ENCODE measurements at regions of chr3 and their contacts with region 1.

Region 1: GRCh38 chr3:119937229-119937628 is 155.3 kb downstream of the NR1I2 start:
- DNase-seq: no peak
- ATAC-seq: no peak
- H3K4me3 ChIP-seq: no peak overlapping the region
- H3K27ac ChIP-seq: no peak overlapping the region
- H3K4me1 ChIP-seq: peaks cover 0 to 12% of the 10 kb centered on the region in 2 donors
- H3K27me3 ChIP-seq: no peaks in the 10 kb centered on the region
- CTCF ChIP-seq: no peak
- POLR2A ChIP-seq: no peak

Region 2: GRCh38 chr3:119864476-119864875 is 72.8 kb before region 1 on chr3:
- in situ Hi-C with region 1: no loop called
- intact Hi-C with region 1: loop called (anchors 2 kb)
- DNase-seq: no peak
- ATAC-seq: no peak
- H3K4me3 ChIP-seq: no peak overlapping the region
- H3K27ac ChIP-seq: no peak overlapping the region
- H3K4me1 ChIP-seq: peaks cover 0 to 7% of the 10 kb centered on the region in 2 donors
- H3K27me3 ChIP-seq: no peaks in the 10 kb centered on the region
- CTCF ChIP-seq: no peak
- POLR2A ChIP-seq: no peak

Measured in gastrocnemius medialis (tissue), 4 donors.